ENCODE measurements at regions of chr21 and their contacts with region 1.

Region 1: GRCh38 chr21:42156690-42157577 is 62.0 kb upstream of the ABCG1 start:
- DNase-seq: no peak
- ATAC-seq: peak; percentile 19; the same call in 1 of the 3 replicates
- H3K4me3 ChIP-seq: no peak overlapping the region
- H3K27ac ChIP-seq: no peak overlapping the region
- H3K4me1 ChIP-seq: 0 out of 2 replicates have a peak, but pooled peaks cover 7% of the 10 kb centered on the region
- H3K27me3 ChIP-seq: peaks cover 3 to 13% of the 10 kb centered on the region in 2 experiments; a peak in 3 of 5 replicates
- CTCF ChIP-seq: no peak
- EP300 ChIP-seq: no peak
- POLR2A ChIP-seq: no peak
- RAD21 ChIP-seq: no peak

Region 2: GRCh38 chr21:42107881-42108553 is 48.9 kb before region 1 on chr21:
- CTCF ChIA-PET with region 1: no interaction called
- POLR2A ChIA-PET with region 1: no interaction called
- in situ Hi-C with region 1: no loop called
- intact Hi-C with region 1: no loop called
- DNase-seq: peak; percentile 34
- ATAC-seq: peak; percentile 97
- H3K4me3 ChIP-seq: no peak overlapping the region
- H3K27ac ChIP-seq: no peak overlapping the region
- H3K4me1 ChIP-seq: peaks cover 9% of the 10 kb centered on the region
- H3K27me3 ChIP-seq: peaks cover 0 to 54% of the 10 kb centered on the region in 2 experiments; a peak in 3 of 5 replicates
- CTCF ChIP-seq: peak; percentile 91
- EP300 ChIP-seq: no peak
- POLR2A ChIP-seq: no peak
- RAD21 ChIP-seq: peak; percentile 72

Region 3: DNA sequence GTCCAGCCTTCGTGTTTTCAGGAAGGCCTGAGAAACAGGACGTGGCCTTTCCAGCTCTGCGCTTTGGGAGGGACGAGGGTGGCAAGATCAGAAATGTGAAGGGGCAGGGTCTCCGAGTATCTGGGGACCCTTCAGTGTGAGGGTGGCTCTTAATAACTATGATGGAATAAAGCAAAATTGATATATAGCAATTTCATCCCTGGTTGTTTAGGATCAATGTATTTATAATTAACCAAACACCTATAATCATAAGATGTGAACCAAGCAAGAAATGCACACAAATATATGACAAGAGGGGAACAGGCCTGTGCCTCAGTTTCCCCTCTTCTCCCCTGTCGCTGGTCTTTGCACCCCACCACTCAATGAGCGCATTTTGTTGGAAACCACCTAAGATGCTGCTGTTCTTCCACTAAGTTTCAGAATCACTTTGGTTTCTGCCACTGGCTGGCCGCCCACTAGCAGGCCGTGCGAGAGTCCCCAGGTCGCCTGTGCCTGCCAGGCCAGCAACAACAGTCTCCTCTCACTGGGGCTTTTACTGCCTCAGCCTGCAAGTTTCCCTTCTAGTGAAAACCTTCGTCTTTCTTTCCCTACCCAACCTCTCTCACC is 283.4 kb after region 1 on chr21:
- CTCF ChIA-PET with region 1: no interaction called
- POLR2A ChIA-PET with region 1: no interaction called
- in situ Hi-C with region 1: loop called (anchors 10 kb)
- intact Hi-C with region 1: no loop called
- DNase-seq: no peak
- ATAC-seq: no peak
- H3K4me3 ChIP-seq: no peak overlapping the region
- H3K27ac ChIP-seq: no peak overlapping the region
- H3K4me1 ChIP-seq: no peaks in the 10 kb centered on the region
- H3K27me3 ChIP-seq: 0 out of 5 replicates have a peak, but pooled peaks cover 0 to 4% of the 10 kb centered on the region in 2 experiments
- CTCF ChIP-seq: no peak
- EP300 ChIP-seq: no peak
- POLR2A ChIP-seq: no peak
- RAD21 ChIP-seq: no peak